Dorsolateral prefrontal cortex (tissue), 120 donors: ENCODE measurements at regions of chr3 and their contacts with region 1.

Region 1: DNA sequence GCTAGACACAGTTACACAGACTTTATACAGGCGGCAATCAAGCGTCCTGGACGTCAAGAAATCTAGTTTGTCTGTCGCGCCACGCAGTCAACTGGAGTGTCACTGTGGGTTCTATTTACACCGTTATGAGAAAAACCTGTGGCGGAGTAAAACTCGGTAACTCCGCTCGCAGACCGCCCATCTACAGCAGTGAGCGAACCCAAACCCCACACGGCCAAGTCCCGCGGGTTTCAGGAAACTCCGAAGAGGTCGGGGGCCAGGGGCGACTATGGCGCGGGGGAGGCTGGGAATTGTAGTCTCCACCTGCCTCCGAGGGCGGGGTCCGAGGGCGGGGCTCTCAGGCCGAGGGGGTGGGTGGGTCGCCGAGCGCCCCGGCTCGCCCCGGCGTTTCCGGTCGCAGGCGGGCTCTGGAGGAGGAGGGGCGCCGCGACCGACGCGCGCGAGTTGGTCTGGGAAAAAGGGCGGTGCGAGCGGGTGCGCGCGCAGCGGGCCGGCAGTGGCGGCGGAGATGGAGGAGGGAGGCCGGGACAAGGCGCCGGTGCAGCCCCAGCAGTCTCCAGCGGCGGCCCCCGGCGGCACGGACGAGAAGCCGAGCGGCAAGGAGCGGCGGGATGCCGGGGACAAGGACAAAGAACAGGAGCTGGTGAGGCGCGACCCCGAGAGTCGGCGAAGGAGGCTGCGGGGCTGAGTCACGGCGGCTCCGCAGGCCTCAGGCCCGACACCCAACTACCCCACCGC is at the start of gene PSMD2:
- DNase-seq: peak; percentile 95 to 98 (median 97)
- H3K4me3 ChIP-seq: peak within 1 kb of the TSS; percentile 40 to 100 (median 94)
- H3K27ac ChIP-seq: peak within 1 kb of the TSS; percentile 4 to 94 (median 82)
- H3K27me3 ChIP-seq: no peaks in the 10 kb centered on the region
- CTCF ChIP-seq: peak in 33 of 56 donors; percentile 11 to 64 (median 34)
- total RNA-seq, gene PSMD2: 147 to 269 (median 208) TPM

Region 2: GRCh38 chr3:184135149-184135910 is 163.6 kb before region 1 on chr3 and contains the start of gene EIF2B5:
- intact Hi-C with region 1: loop called (anchors 5 kb)
- DNase-seq: peak; percentile 89 to 97 (median 94)
- H3K4me3 ChIP-seq: peak within 1 kb of the TSS; percentile 66 to 99 (median 94)
- H3K27ac ChIP-seq: peak within 1 kb of the TSS; percentile 79 to 99 (median 95)
- H3K27me3 ChIP-seq: no peaks in the 10 kb centered on the region
- CTCF ChIP-seq: peak; percentile 55 to 90 (median 76)
- total RNA-seq, gene EIF2B5: 35.0 to 63.0 (median 44.9) TPM

Region 3: DNA sequence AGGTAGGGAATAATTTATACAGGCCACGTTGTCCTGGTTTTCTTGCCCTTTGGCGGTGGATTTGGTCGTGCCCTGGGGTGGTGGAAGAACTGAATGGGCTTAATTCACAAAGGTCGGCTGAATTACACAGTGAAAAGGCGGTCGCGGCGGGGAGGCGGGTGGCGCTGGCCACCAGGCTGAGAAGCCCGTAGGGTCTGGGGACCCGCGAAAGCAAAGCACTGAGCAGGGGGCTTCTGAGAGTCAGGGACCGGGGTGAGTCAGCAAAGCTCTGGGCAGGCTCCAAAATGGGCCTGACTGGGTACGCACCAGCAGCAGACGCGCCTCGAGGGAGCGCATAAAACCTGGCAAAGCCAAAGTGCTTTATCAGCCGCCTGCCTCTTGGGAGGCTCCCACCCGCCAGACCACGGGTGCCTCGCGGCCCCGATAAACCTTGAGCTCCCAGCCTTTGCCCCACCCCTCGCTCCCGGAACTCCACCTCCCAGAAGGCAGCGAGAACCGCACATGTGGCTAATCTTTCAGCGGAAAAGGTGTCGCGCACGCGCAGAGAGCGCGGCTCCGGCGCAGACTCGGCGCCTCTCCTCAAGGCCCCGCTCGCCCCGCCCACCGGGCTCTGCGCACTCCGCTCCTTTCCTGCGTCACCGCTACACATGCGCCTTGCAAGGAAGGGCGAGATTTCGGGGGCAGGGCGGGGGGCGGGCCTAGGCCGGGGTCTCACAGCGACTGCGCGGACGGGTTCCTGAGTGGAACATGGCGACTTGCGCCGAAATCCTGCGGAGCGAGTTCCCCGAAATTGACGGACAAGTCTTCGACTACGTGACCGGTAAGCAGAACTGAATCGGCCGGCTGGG is 113.2 kb before region 1 on chr3 and contains the start of gene ABCF3:
- intact Hi-C with region 1: loop called (anchors 5 kb)
- DNase-seq: peak; percentile 97 to 99 (median 98)
- H3K4me3 ChIP-seq: peak within 1 kb of the TSS; percentile 62 to 100 (median 96)
- H3K27ac ChIP-seq: peak within 1 kb of the TSS; percentile 54 to 96 (median 89)
- H3K27me3 ChIP-seq: no peaks in the 10 kb centered on the region
- CTCF ChIP-seq: peak in 23 of 56 donors; percentile 3 to 46 (median 23)
- total RNA-seq, gene ABCF3: 72.1 to 140 (median 98.1) TPM

Region 4: DNA sequence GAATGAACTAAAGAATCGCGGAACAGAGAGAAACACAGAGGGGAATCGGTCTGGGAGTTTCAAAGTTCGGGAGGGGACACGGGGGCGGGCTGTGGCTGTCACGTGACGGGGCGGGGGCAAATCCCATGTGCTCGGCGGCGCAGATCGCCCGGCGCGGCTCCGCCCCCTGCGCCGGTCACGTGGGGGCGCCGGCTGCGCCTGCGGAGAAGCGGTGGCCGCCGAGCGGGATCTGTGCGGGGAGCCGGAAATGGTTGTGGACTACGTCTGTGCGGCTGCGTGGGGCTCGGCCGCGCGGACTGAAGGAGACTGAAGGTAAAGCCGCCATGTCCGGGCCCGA is 15.4 kb after region 1 on chr3 and contains the start of gene EIF4G1:
- intact Hi-C with region 1: loop called (anchors 1 to 2 kb)
- DNase-seq: peak; percentile 86 to 96 (median 93)
- H3K4me3 ChIP-seq: peak within 1 kb of the TSS; percentile 44 to 88 (median 81)
- H3K27ac ChIP-seq: peak within 1 kb of the TSS; percentile 7 to 97 (median 92)
- H3K27me3 ChIP-seq: no peaks in the 10 kb centered on the region
- CTCF ChIP-seq: peak in 10 of 56 donors; percentile 5 to 28 (median 15)
- total RNA-seq, gene EIF4G1: 152 to 287 (median 190) TPM